Cardiac septum (tissue), 1 donor: ENCODE measurements at regions of chr19 and their contacts with region 1.

Region 1: GRCh38 chr19:47157431-47158321 is 27.0 kb downstream of the SAE1 start:
- DNase-seq: peak; percentile 78

Region 2: GRCh38 chr19:47176627-47177090 is 19.0 kb after region 1 on chr19:
- intact Hi-C with region 1: no loop called
- DNase-seq: no peak

Region 3: DNA sequence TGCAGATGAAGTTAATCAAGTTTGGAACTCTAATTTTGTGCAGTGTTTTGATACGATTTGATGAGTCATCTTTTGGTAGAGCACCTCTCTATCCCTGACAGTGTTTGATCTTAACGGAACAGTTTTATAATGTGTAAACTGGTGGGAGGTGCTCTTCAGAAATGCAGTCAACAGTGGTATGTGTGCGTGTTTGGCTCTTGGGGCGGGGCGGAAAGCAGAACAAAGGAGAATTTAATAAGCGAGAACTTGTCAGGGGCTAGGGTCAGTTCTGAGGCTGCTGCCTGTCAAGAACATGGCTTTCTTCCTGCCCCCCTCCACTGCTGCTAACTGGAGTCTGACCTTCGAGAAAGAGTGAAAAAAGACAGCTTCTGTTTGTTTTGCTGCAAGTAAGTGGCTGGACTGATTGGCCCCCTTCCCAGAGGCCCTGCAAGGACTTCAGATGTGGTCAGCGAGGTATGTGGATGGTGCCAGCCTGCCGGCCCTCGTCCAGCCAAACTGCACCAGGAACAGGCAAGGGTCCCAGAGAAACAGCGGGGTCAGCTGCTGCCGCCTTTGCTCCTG is 32.6 kb after region 1 on chr19:
- intact Hi-C with region 1: loop called (anchors 5 kb)
- DNase-seq: no peak

Region 4: GRCh38 chr19:47210689-47211316 is 53.1 kb after region 1 on chr19:
- intact Hi-C with region 1: loop called (anchors 5 kb)
- DNase-seq: no peak